Caco-2 (cell line): ENCODE measurements at regions of chr1 and their contacts with region 1.

Region 1: GRCh38 chr1:43678940-43679339 is 28.4 kb upstream of the ST3GAL3 start:
- DNase-seq: no peak
- H3K4me3 ChIP-seq: no peak overlapping the region
- H3K4me3 Mint-ChIP-seq: no peak overlapping the region
- H3K27ac Mint-ChIP-seq: no peak overlapping the region
- H3K4me1 ChIP-seq: no peaks in the 10 kb centered on the region
- H3K4me1 Mint-ChIP-seq: no peaks in the 10 kb centered on the region
- H3K27me3 ChIP-seq: no peaks in the 10 kb centered on the region
- H3K27me3 Mint-ChIP-seq: no peaks in the 10 kb centered on the region
- CTCF ChIP-seq: no peak

Region 2: GRCh38 chr1:43659212-43660166 is 19.5 kb before region 1 on chr1:
- CTCF ChIA-PET with region 1: no interaction called
- POLR2A ChIA-PET with region 1: interaction called, 10 read pairs
- intact Hi-C with region 1: no loop called
- DNase-seq: no peak
- H3K4me3 ChIP-seq: no peak overlapping the region
- H3K4me3 Mint-ChIP-seq: no peak overlapping the region
- H3K27ac Mint-ChIP-seq: no peak overlapping the region
- H3K4me1 ChIP-seq: no peaks in the 10 kb centered on the region
- H3K4me1 Mint-ChIP-seq: no peaks in the 10 kb centered on the region
- H3K27me3 ChIP-seq: no peaks in the 10 kb centered on the region
- H3K27me3 Mint-ChIP-seq: no peaks in the 10 kb centered on the region
- CTCF ChIP-seq: no peak